Activated B cell treated with CpG ODN at 0.5 μM for 24 hours (primary cell): ENCODE measurements at regions of chr7 and their contacts with region 1.

Region 1: GRCh38 chr7:94657771-94658693 is 2.1 kb upstream of the SGCE start:
- DNase-seq: peak; percentile 90
- ATAC-seq: peak; percentile 82
- H3K4me3 Mint-ChIP-seq: peak overlapping the region; percentile 89
- H3K27ac Mint-ChIP-seq: no peak overlapping the region
- H3K4me1 Mint-ChIP-seq: peaks cover 20% of the 10 kb centered on the region
- H3K27me3 Mint-ChIP-seq: no peaks in the 10 kb centered on the region
- CTCF ChIP-seq: no peak

Region 2: DNA sequence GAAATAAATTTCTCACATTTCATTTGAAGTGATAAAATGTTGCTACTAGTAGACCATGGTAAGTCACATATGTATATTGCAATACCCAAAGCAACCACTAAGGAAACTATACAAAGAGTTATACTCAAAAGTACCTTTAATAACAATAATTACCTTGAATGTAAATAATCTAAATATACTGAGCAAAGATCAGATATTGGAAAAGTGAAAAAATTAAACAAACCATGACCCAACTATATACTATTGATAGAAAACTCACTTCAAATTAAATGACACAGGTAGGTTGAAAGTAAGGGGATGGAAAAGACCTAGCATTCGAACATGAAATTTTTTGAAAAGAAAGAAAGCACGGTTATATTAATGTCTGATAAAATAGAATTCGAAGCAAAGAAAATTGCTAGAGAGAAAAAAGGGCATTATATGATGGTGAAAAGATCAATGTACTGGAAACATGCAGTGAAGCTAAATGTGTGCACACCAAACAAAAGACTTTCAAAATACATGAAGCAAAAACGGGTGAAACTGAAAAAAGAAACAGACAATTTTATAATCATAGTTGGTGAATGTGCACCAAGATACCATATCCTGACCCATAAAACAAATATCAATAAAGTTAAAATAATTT is 796.6 kb before region 1 on chr7:
- CTCF ChIA-PET with region 1: no interaction called
- POLR2A ChIA-PET with region 1: no interaction called
- intact Hi-C with region 1: no loop called
- DNase-seq: no peak
- ATAC-seq: no peak
- H3K4me3 Mint-ChIP-seq: no peak overlapping the region
- H3K27ac Mint-ChIP-seq: no peak overlapping the region
- H3K4me1 Mint-ChIP-seq: no peaks in the 10 kb centered on the region
- H3K27me3 Mint-ChIP-seq: peaks cover 6% of the 10 kb centered on the region
- CTCF ChIP-seq: no peak

Region 3: DNA sequence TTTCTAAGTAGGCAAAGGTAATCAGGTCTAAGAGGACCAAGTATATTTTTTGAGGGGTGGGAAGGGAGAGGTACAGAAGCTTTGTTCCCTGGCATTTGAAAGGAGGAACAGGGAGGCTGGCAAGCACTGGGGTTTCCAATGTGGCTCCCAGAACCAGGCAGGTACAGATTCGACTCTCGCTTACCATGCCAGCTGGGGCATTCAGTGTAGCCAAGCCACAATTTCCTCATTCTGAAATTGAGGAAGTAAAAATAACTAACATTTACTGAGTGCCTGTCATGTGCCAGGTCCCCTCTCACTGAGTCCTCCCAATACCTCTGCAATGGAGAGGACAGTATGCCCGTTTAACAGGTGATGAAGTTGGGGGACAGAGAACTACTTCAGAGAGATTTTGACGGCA is 608.0 kb before region 1 on chr7:
- CTCF ChIA-PET with region 1: no interaction called
- POLR2A ChIA-PET with region 1: no interaction called
- intact Hi-C with region 1: loop called (anchors 2 kb)
- DNase-seq: peak; percentile 44
- ATAC-seq: peak; percentile 87
- H3K4me3 Mint-ChIP-seq: peak overlapping the region; percentile 71
- H3K27ac Mint-ChIP-seq: peak overlapping the region; percentile 97
- H3K4me1 Mint-ChIP-seq: peaks cover 77% of the 10 kb centered on the region
- H3K27me3 Mint-ChIP-seq: no peaks in the 10 kb centered on the region
- CTCF ChIP-seq: no peak

Region 4: GRCh38 chr7:94350733-94351132 is 307.3 kb before region 1 on chr7:
- CTCF ChIA-PET with region 1: no interaction called
- POLR2A ChIA-PET with region 1: no interaction called
- intact Hi-C with region 1: loop called (anchors 5 kb)
- DNase-seq: no peak
- ATAC-seq: no peak
- H3K4me3 Mint-ChIP-seq: no peak overlapping the region
- H3K27ac Mint-ChIP-seq: no peak overlapping the region
- H3K4me1 Mint-ChIP-seq: peaks cover 30% of the 10 kb centered on the region
- H3K27me3 Mint-ChIP-seq: peaks cover 13% of the 10 kb centered on the region
- CTCF ChIP-seq: no peak

Region 5: DNA sequence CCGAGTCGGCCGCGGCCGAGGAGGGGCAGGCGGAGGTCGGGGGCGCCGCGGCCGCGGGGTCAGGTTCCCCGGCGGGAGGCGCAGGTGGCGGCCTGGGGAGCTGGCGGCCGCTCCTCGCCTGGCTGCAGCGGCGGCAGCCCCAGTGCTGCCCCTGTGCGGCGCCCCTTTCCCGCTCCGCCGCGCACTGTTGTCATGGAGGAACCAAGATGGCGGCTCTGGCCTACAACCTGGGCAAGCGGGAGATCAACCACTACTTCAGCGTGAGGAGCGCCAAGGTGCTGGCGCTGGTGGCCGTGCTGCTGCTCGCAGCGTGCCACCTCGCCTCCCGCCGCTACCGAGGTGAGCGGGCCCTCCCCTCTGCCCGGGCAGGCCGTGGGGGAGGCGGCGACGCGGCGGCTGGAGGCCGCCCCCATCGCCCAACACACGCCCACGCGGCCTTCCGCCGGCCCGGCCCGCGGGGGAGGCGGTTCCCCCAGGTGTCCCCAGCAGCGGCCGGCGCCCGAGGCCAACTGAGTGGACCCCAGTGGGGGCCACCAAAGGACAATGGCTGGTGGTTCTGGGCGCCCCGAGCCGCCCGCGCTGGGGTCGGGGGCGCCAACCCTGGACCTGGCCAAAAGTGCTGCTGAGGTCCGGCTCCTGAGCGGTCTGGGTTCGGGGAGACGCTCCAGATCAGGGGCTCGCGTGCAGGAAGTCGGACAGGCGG is 148.0 kb before region 1 on chr7:
- CTCF ChIA-PET with region 1: no interaction called
- POLR2A ChIA-PET with region 1: interaction called, 8 read pairs
- intact Hi-C with region 1: loop called (anchors 1 kb)
- DNase-seq: peak; percentile 73
- ATAC-seq: peak; percentile 80
- H3K4me3 Mint-ChIP-seq: peak overlapping the region; percentile 87
- H3K27ac Mint-ChIP-seq: peak overlapping the region; percentile 88
- H3K4me1 Mint-ChIP-seq: peaks cover 46% of the 10 kb centered on the region
- H3K27me3 Mint-ChIP-seq: no peaks in the 10 kb centered on the region
- CTCF ChIP-seq: no peak

Region 6: GRCh38 chr7:94591176-94591575 is 66.9 kb before region 1 on chr7:
- CTCF ChIA-PET with region 1: no interaction called
- POLR2A ChIA-PET with region 1: no interaction called
- intact Hi-C with region 1: loop called (anchors 5 kb)
- DNase-seq: no peak
- ATAC-seq: peak; percentile 90
- H3K4me3 Mint-ChIP-seq: peak overlapping the region; percentile 42
- H3K27ac Mint-ChIP-seq: peak overlapping the region; percentile 0
- H3K4me1 Mint-ChIP-seq: peaks cover 17% of the 10 kb centered on the region
- H3K27me3 Mint-ChIP-seq: no peaks in the 10 kb centered on the region
- CTCF ChIP-seq: no peak

Region 7: DNA sequence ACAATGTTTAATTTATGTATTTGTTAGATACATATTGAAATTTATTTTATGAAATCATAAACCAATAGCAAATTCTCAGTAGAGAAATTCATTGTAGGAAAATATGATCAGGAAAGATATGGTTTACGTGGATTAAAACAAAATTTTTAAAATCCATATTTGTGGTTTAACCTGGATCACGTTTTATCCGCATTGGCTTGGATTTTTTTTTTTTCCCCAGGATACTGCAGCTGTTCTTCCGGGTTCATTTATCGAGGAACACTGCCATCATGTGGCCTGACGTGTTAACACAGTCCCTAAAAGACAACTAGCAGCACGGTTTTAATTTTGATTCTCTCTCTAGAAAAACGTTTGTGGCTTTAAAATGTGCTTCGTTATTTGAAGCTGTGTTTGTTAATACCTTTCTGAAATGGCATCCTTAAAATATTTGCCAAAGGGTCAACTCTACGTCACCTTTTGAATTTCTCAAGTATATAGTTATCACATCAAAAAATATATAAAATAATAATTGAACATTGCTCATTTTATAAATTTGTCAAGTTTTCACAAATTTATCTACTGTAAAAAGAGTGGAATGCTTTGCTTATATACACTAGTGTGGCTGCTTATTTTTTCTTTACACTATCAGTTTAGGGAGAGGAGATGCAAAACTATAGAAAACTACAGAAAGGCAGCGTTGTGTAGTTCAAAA is 819.0 kb after region 1 on chr7:
- CTCF ChIA-PET with region 1: interaction called, 3 read pairs
- POLR2A ChIA-PET with region 1: no interaction called
- intact Hi-C with region 1: loop called (anchors 5 kb)
- DNase-seq: no peak
- ATAC-seq: peak; percentile 77
- H3K4me3 Mint-ChIP-seq: no peak overlapping the region
- H3K27ac Mint-ChIP-seq: no peak overlapping the region
- H3K4me1 Mint-ChIP-seq: no peaks in the 10 kb centered on the region
- H3K27me3 Mint-ChIP-seq: peaks cover 4% of the 10 kb centered on the region
- CTCF ChIP-seq: peak; percentile 96